Sigmoid colon (tissue), 7 donors: ENCODE measurements at regions of chr1 and their contacts with region 1.

Region 1: DNA sequence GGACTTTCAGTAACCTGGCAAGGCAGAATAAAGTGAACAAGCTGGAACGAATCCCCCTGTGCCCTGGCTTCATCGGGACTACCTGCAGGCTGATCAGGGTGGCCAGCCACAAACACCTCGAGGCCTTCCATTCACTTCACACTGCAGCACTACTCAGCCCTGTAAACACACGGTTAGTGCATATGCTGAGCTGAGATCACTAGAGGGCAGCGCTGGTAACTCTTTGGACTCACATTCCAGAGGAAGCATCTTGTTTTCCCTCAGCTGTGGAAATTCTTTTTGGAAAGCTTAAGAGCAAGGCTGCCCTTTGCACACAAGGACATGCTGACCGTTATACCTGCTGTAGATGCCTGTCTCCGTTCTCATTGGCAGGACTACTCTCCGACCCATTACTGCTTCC is 32.1 kb downstream of the PCSK9 start:
- DNase-seq: no peak
- H3K4me3 ChIP-seq: no peak overlapping the region
- H3K27ac ChIP-seq: no peak overlapping the region
- H3K4me1 ChIP-seq: peaks cover 0 to 8% (median 2%) of the 10 kb centered on the region in 4 donors
- H3K27me3 ChIP-seq: no peaks in the 10 kb centered on the region
- CTCF ChIP-seq: no peak
- EP300 ChIP-seq: no peak
- POLR2A ChIP-seq: no peak

Region 2: GRCh38 chr1:55127827-55128343 is 56.4 kb after region 1 on chr1:
- intact Hi-C with region 1: loop called (anchors 10 kb)
- DNase-seq: no peak
- H3K4me3 ChIP-seq: no peak overlapping the region
- H3K27ac ChIP-seq: no peak overlapping the region
- H3K4me1 ChIP-seq: no peaks in the 10 kb centered on the region
- H3K27me3 ChIP-seq: no peaks in the 10 kb centered on the region
- CTCF ChIP-seq: no peak
- EP300 ChIP-seq: no peak
- POLR2A ChIP-seq: no peak